ENCODE measurements at regions of chr1 and their contacts with region 1.

Region 1: GRCh38 chr1:234722904-234723720 is 113.1 kb upstream of the IRF2BP2 start:
- DNase-seq: peak; percentile 59 to 74
- ATAC-seq: peak; percentile 4 to 32 (median 16)
- H3K4me3 ChIP-seq: peak overlapping the region in 5 of 10 donors; percentile 12 to 35 (median 15)
- H3K27ac ChIP-seq: peak overlapping the region; percentile 91 to 100 (median 98)
- H3K4me1 ChIP-seq: peaks cover 57 to 99% (median 93%) of the 10 kb centered on the region in 9 donors
- H3K27me3 ChIP-seq: no peaks in the 10 kb centered on the region
- CTCF ChIP-seq: no peak

Region 2: GRCh38 chr1:234610348-234611152 is 112.6 kb before region 1 on chr1:
- intact Hi-C with region 1: loop called (anchors 1 to 10 kb)
- DNase-seq: peak; percentile 95 to 97
- ATAC-seq: peak; percentile 55 to 86 (median 80)
- H3K4me3 ChIP-seq: peak overlapping the region; percentile 27 to 70 (median 58)
- H3K27ac ChIP-seq: peak overlapping the region; percentile 95 to 100 (median 99)
- H3K4me1 ChIP-seq: peaks cover 12 to 46% (median 41%) of the 10 kb centered on the region in 9 donors
- H3K27me3 ChIP-seq: no peaks in the 10 kb centered on the region
- CTCF ChIP-seq: peak in 3 of 9 donors; percentile 2 to 12 (median 4)

Region 3: GRCh38 chr1:234842726-234843641 is 119.9 kb after region 1 on chr1:
- intact Hi-C with region 1: loop called in 2 of 10 experiments (anchors 5 to 10 kb)
- DNase-seq: peak; percentile 34 to 66
- ATAC-seq: peak; percentile 22 to 82 (median 64)
- H3K4me3 ChIP-seq: no peak overlapping the region
- H3K27ac ChIP-seq: peak overlapping the region in 8 of 10 donors; percentile 20 to 85 (median 54)
- H3K4me1 ChIP-seq: peaks cover 7 to 79% (median 31%) of the 10 kb centered on the region in 9 donors
- H3K27me3 ChIP-seq: no peaks in the 10 kb centered on the region
- CTCF ChIP-seq: no peak

Region 4: DNA sequence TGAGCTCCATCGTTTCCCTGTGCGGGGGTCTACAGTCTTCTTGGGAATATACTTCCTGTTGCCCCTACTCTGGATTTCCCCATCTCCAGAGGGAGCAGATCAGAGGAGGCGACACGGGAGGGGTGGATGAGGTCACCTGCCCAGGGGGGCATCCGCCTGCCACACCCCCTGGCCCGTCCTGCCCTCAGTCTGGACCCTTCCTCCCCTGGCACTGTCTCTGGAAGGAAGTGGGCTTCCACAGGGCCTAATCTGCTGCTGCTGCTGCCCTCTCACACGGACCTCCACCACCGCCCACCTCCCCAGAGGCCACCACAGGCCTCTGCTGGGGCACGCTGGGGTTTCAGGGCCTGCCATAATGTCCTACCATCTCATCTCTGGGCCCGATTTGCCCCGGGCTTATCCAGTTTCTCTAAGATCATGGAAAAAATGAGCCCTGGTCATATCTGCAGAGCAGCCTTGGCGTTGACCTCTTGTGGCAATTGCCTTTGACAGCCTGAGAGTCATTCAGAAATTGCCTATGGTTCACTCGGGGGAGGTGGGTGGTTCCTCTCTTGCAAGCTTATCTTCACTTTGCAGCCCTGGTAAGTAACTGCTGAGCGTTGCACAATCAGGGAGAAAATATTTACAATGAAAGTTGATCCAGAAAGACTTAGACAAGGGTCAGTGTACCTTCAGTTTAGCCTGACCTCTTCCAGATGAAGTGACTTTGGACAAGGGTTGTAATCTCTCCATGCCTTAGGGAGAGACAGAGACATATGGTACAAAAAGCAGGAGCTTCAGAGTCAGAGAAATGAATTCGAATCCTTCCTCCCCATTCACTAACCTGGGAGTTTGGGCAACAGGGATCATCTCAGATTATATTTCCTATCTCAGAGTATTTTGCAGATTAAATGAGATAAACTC is 153.1 kb after region 1 on chr1:
- intact Hi-C with region 1: loop called in 1 of 10 experiments (anchors 5 kb)
- DNase-seq: no peak
- ATAC-seq: peak; percentile 18 to 79 (median 48)
- H3K4me3 ChIP-seq: no peak overlapping the region
- H3K27ac ChIP-seq: peak overlapping the region in 9 of 10 donors; percentile 7 to 82 (median 60)
- H3K4me1 ChIP-seq: peaks cover 0 to 51% (median 19%) of the 10 kb centered on the region in 9 donors
- H3K27me3 ChIP-seq: no peaks in the 10 kb centered on the region
- CTCF ChIP-seq: no peak

Region 5: DNA sequence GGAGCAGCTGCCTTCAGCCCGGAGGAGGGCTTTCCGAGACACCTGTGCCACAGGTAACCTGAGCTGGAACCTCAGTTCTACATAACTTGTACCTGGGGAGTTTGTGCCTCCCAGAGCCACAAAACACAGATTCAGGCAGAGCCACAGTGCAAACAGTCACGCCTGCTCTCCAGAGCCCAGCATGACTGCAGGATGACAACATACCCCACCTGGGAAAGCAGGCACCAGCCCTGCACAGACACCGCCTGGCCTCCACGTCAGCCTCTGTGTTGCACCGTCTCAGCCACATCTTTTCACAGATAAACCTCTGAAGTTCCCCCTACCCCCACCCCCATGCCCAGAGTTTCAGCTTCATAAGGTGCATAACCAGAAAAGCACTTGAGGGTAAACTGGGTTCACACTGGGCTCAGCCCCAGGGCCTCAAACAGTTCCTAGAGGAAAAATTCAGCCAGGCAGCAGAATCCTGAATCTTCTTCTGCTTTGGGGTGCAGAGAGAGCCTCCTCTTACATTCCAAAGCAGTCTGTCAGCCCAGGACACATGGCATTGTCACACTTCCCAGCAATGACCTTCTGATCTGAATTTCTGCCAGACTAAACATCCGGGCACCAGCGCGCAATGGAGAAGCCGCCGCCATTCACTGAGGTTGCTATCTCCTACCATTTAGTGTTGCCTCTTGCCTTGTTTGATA is 176.1 kb after region 1 on chr1:
- intact Hi-C with region 1: loop called in 2 of 10 experiments (anchors 5 to 10 kb)
- DNase-seq: peak in 1 of 2 donors; percentile 71
- ATAC-seq: peak; percentile 68 to 83 (median 76)
- H3K4me3 ChIP-seq: no peak overlapping the region
- H3K27ac ChIP-seq: peak overlapping the region; percentile 64 to 87 (median 82)
- H3K4me1 ChIP-seq: peaks cover 15 to 52% (median 29%) of the 10 kb centered on the region in 9 donors
- H3K27me3 ChIP-seq: no peaks in the 10 kb centered on the region
- CTCF ChIP-seq: no peak

Region 6: DNA sequence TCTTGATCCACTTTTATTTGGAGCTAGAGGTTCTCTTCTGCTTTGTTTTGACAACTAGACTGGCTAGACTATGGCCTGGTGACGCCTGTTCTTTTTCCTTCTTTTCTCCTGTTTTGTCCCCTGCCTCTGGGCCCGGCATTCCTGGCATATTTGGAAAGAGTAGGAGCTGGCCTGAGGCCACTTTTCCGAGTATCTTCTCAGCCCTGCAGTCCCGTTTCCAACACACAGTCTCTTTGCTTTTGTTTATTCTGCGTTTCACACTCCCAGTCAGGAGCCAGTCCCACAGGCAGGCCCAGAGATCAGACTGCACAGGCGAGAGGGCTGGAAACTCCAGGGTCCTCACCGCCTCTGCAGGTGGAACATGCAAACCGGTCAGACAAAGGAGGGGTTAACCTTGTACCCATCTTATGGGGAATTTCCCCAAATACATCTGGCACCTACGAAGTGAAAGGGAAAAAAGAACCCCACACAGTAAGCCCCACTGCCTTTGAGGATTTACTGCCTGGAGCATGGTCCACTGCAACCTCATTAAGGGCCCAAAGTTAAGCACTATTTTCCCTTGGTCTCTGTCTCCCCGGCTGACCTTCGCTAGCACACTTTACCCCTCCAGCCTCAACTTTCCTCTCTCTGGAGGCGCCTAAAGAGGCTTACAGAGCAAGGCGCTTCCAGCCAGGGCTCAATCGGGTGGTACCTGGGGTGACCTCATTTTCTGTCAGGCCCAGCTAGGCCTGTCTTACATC is 264.5 kb after region 1 on chr1:
- intact Hi-C with region 1: loop called in 4 of 10 experiments (anchors 5 to 10 kb)
- DNase-seq: peak; percentile 58 to 82
- ATAC-seq: peak; percentile 74 to 93 (median 90)
- H3K4me3 ChIP-seq: no peak overlapping the region
- H3K27ac ChIP-seq: peak overlapping the region; percentile 77 to 98 (median 88)
- H3K4me1 ChIP-seq: peaks cover 18 to 66% (median 44%) of the 10 kb centered on the region in 9 donors
- H3K27me3 ChIP-seq: no peaks in the 10 kb centered on the region
- CTCF ChIP-seq: no peak